ENCODE measurements at regions of chr15 and their contacts with region 1.

Region 1: DNA sequence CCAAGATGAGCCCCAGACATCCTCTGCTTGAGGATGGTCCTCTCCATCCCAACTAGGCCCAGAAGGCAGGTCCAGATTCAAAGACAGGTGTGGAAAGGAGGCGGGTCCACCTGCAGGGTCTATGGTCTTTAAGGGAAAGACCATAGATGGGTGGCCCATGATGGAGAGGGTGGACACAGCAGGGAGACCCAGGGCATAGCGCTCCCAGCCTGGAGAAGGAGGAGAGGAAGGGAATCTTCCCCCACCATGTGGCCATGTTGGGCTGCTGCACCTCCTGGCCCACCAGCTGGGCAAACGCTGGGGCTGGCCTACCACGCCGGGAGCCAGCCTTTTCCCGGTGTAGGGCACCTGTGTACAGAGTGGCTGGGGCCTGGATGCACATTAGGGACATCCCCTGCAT is 265.2 kb upstream of the TLE3 start:
- DNase-seq: peak in 1 of 3 donors; percentile 44
- ATAC-seq: peak; percentile 75 to 89 (median 78)
- H3K4me3 ChIP-seq: no peak overlapping the region
- H3K27ac ChIP-seq: no peak overlapping the region
- H3K4me1 ChIP-seq: peaks cover 0 to 3% (median 0%) of the 10 kb centered on the region in 4 donors
- H3K27me3 ChIP-seq: no peaks in the 10 kb centered on the region
- CTCF ChIP-seq: peak; percentile 51 to 69 (median 61)
- POLR2A ChIP-seq: no peak

Region 2: DNA sequence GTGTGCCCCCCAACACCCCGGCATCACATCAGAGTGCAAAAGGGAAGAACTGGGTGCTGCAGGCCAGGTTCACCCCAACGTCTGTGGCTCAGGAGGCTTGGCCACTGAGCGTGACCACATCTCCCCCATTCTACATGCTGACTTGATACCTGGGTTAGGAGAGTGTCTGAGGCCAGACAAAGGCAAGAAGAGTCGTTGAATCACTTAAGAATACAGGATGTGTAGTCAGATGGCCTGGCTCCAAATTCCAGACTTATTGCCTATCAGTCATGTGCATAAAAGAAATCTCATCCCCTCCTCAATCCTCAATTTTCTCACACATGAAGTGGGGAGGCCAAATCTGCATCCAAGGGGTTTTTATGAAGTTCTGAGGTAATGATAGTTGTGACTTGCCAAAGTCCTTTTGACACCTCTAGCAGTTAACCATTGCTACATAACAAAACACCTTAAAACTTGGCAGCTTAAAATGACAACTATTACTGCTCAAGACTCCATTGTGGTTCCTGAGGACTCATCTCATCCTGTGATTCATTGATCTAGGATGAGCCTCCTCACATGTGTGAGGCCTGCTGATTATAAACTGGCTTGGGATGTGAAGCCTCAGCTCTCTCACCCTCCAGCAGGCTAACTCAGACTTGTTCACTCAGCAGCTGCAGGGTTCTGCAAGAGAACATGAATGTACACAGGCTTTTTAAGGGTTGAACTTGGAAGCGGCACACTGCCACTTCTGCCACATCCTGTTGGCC is 126.4 kb before region 1 on chr15:
- intact Hi-C with region 1: no loop called
- DNase-seq: peak in 1 of 3 donors; percentile 29
- ATAC-seq: no peak
- H3K4me3 ChIP-seq: no peak overlapping the region
- H3K27ac ChIP-seq: no peak overlapping the region
- H3K4me1 ChIP-seq: no peaks in the 10 kb centered on the region
- H3K27me3 ChIP-seq: no peaks in the 10 kb centered on the region
- CTCF ChIP-seq: no peak
- POLR2A ChIP-seq: no peak

Region 3: DNA sequence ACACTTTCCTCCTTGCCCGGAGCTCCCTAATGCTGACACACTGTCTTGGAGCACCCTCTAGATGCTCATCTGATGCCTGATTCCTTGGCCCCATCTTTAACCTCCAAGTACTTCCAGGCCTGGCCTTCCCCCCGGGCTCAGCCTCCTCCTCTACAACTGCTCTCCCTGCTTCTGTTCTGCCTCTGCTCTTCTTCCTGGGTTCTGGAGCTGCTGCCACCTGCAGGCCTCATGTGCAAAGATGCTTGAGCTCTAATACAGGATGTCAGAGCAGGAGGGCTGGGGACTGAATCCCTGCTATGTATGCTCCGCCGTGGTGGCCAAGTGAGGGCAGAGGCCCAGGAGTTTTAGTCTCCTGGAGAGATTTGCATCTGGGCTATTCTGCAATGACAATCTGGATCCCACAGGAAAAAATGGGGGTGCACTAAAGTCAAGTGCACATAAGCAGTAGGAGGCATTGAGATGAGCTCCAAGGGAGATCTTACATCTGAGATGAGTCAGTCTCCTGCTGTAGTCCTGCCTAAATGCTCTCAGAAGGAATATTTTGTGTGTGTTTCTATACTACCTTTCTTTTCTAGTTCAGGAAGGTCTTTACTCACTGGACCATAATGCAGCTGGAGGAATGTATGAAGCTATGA is 104.1 kb after region 1 on chr15:
- intact Hi-C with region 1: loop called in 1 of 2 experiments (anchors 10 kb)
- DNase-seq: peak in 2 of 3 donors; percentile 59 to 64
- ATAC-seq: peak; percentile 68 to 78 (median 74)
- H3K4me3 ChIP-seq: no peak overlapping the region
- H3K27ac ChIP-seq: no peak overlapping the region
- H3K4me1 ChIP-seq: peaks cover 0 to 6% (median 0%) of the 10 kb centered on the region in 4 donors
- H3K27me3 ChIP-seq: no peaks in the 10 kb centered on the region
- CTCF ChIP-seq: peak; percentile 56 to 73 (median 64)
- POLR2A ChIP-seq: no peak

Region 4: DNA sequence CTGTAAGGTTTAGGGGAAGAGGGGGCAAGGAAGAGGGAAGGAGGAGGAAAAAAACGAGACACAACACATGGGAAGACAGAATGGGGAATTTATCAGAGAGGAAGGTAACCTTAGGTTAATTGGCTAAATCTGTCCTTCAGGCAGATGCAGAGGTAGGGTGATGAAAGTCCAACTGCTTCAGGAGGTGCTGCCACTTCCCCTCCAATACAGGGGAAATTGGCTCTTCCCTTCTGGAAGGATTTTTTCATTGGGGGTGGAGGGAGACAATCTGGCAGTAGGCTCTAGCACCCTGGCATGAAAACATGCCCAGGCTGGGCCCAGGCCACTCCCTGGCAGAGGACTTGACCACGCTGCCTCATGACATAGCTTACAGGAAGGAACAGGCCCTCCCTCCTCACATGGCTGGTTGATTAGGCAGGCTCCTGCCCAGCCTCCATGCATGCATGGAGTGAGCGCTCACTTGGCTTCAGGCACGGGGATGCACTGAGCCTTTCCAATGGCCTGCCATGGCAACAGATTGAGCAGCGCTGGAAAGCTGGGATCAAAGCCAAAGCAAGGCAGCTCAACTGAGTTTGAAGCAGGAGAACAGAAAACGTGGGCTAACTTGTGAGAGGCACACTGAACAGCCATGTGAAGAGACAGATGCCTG is 1840.4 kb after region 1 on chr15:
- intact Hi-C with region 1: no loop called
- DNase-seq: no peak
- ATAC-seq: peak in 1 of 4 donors; percentile 34
- H3K4me3 ChIP-seq: no peak overlapping the region
- H3K27ac ChIP-seq: no peak overlapping the region
- H3K4me1 ChIP-seq: no peaks in the 10 kb centered on the region
- H3K27me3 ChIP-seq: peaks cover 0 to 3% of the 10 kb centered on the region in 2 donors
- CTCF ChIP-seq: no peak
- POLR2A ChIP-seq: no peak